HepG2 (cell line): ENCODE measurements at regions of chr15 and their contacts with region 1.

Region 1: GRCh38 chr15:38440353-38441129 is 13.4 kb upstream of the FAM98B start:
- DNase-seq: peak; percentile 75
- ATAC-seq: peak; percentile 96
- H3K4me3 ChIP-seq: peak overlapping the region in 1 of 3 experiments; percentile 28; a peak in 2 of 6 replicates
- H3K27ac ChIP-seq: no peak overlapping the region
- H3K4me1 ChIP-seq: 0 out of 2 replicates have a peak, but pooled peaks cover 4% of the 10 kb centered on the region
- H3K27me3 ChIP-seq: no peaks in the 10 kb centered on the region
- CTCF ChIP-seq: peak; percentile 90
- EP300 ChIP-seq: no peak
- POLR2A ChIP-seq: no peak
- RAD21 ChIP-seq: peak; percentile 62; the same call in 1 of the 2 replicates

Region 2: GRCh38 chr15:38453971-38454695 is 13.6 kb after region 1 on chr15 and contains the start of gene FAM98B:
- CTCF ChIA-PET with region 1: no interaction called
- POLR2A ChIA-PET with region 1: interaction called, 23 read pairs
- in situ Hi-C with region 1: no loop called
- intact Hi-C with region 1: no loop called
- DNase-seq: peak; percentile 73
- ATAC-seq: peak; percentile 96
- H3K4me3 ChIP-seq: peak within 1 kb of the TSS; percentile 93 to 96 (median 96)
- H3K27ac ChIP-seq: peak within 1 kb of the TSS; percentile 98
- H3K4me1 ChIP-seq: peaks cover 19% of the 10 kb centered on the region
- H3K27me3 ChIP-seq: peaks cover 0 to 5% of the 10 kb centered on the region in 2 experiments; a peak in 1 of 5 replicates
- CTCF ChIP-seq: peak; percentile 25; the same call in 1 of the 2 replicates
- EP300 ChIP-seq: no peak; a peak in 1 of 4 replicates
- POLR2A ChIP-seq: peak; percentile 89 to 91
- RAD21 ChIP-seq: peak; percentile 38
- total RNA-seq, gene FAM98B: 4.7 and 8.1 TPM in 2 replicates

Region 3: GRCh38 chr15:38474155-38474757 is 33.7 kb after region 1 on chr15:
- CTCF ChIA-PET with region 1: interaction called, 3 read pairs
- POLR2A ChIA-PET with region 1: no interaction called
- in situ Hi-C with region 1: no loop called
- intact Hi-C with region 1: loop called (anchors 1 kb)
- DNase-seq: peak; percentile 63
- ATAC-seq: peak; percentile 89
- H3K4me3 ChIP-seq: no peak overlapping the region
- H3K27ac ChIP-seq: no peak overlapping the region
- H3K4me1 ChIP-seq: no peaks in the 10 kb centered on the region
- H3K27me3 ChIP-seq: no peaks in the 10 kb centered on the region
- CTCF ChIP-seq: peak; percentile 82
- EP300 ChIP-seq: no peak
- POLR2A ChIP-seq: no peak
- RAD21 ChIP-seq: no peak

Region 4: GRCh38 chr15:38683382-38684242 is 243.1 kb after region 1 on chr15:
- CTCF ChIA-PET with region 1: interaction called, 12 read pairs
- POLR2A ChIA-PET with region 1: no interaction called
- in situ Hi-C with region 1: loop called (anchors 5 kb)
- intact Hi-C with region 1: loop called (anchors 1 kb)
- DNase-seq: peak; percentile 27
- ATAC-seq: peak; percentile 84
- H3K4me3 ChIP-seq: no peak overlapping the region
- H3K27ac ChIP-seq: no peak overlapping the region
- H3K4me1 ChIP-seq: no peaks in the 10 kb centered on the region
- H3K27me3 ChIP-seq: no peaks in the 10 kb centered on the region; a peak in 1 of 5 replicates
- CTCF ChIP-seq: peak; percentile 75
- EP300 ChIP-seq: no peak
- POLR2A ChIP-seq: no peak
- RAD21 ChIP-seq: no peak

Region 5: DNA sequence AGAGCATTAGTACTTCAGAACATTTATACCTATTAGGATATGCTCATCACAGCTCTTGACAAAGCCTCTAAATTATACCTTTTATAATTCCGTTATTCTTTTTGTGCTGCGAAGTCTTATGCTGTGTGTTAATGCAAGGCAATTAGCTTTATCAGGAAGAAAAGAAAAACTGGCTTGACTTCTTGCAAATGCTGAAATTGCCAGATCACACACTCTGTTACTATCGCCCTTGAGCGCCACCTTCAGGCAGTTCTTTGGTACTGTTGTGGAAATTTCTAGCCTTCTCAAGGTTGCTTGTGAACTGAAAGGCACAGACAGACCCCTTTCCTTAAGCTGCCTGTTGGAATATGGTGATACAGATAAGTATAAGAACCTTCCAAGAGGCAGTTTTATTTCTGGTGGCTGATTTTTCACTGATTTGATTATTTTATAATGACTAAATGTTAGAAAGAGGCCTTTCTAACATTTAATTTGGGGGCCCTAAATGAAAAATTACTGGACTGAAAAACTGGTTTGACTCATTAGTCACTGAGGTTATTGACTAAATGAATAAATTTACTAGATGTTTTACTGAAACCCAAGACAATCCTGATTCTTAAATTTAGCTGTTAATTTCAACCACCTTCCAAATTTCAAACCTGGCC is 250.3 kb after region 1 on chr15:
- CTCF ChIA-PET with region 1: interaction called, 3 read pairs
- POLR2A ChIA-PET with region 1: no interaction called
- in situ Hi-C with region 1: loop called (anchors 5 kb)
- intact Hi-C with region 1: loop called (anchors 2 kb)
- DNase-seq: peak; percentile 53
- ATAC-seq: peak; percentile 81
- H3K4me3 ChIP-seq: no peak overlapping the region
- H3K27ac ChIP-seq: no peak overlapping the region
- H3K4me1 ChIP-seq: no peaks in the 10 kb centered on the region
- H3K27me3 ChIP-seq: no peaks in the 10 kb centered on the region; a peak in 2 of 5 replicates
- CTCF ChIP-seq: peak; percentile 73
- EP300 ChIP-seq: no peak
- POLR2A ChIP-seq: no peak
- RAD21 ChIP-seq: no peak

Region 6: DNA sequence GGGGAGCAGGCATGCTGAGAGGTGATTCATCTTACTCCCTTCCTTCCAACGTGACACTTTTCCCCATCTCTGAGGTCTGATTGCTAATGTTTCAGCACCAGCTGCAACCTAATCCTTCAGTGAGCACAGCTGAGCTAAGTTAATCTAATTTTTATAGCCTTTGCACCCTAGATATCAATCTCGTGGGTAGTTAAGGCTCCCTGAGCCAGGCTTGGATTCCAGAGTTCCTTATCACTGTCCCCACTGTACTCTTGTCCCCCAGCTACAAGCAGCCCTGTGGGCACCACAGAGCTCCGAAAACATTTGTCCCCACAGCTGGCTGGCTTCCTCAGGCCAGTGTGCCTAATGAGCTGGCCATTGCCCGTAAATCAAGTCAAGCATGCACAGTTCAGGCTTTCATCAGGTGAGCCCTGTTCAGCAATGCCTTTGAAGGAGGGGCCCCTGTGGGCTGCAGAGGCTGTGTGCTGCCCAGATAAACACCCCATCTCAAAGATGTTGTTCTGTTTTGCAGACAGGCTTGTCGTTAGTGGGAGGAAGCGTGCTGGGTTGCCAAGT is 500.9 kb after region 1 on chr15:
- CTCF ChIA-PET with region 1: no interaction called
- POLR2A ChIA-PET with region 1: no interaction called
- in situ Hi-C with region 1: no loop called
- intact Hi-C with region 1: no loop called
- DNase-seq: no peak
- ATAC-seq: no peak
- H3K4me3 ChIP-seq: no peak overlapping the region
- H3K27ac ChIP-seq: no peak overlapping the region
- H3K4me1 ChIP-seq: no peaks in the 10 kb centered on the region
- H3K27me3 ChIP-seq: no peaks in the 10 kb centered on the region
- CTCF ChIP-seq: no peak
- EP300 ChIP-seq: no peak
- POLR2A ChIP-seq: no peak
- RAD21 ChIP-seq: no peak